ENCODE measurements at regions of chr7 and their contacts with region 1.

Region 1: DNA sequence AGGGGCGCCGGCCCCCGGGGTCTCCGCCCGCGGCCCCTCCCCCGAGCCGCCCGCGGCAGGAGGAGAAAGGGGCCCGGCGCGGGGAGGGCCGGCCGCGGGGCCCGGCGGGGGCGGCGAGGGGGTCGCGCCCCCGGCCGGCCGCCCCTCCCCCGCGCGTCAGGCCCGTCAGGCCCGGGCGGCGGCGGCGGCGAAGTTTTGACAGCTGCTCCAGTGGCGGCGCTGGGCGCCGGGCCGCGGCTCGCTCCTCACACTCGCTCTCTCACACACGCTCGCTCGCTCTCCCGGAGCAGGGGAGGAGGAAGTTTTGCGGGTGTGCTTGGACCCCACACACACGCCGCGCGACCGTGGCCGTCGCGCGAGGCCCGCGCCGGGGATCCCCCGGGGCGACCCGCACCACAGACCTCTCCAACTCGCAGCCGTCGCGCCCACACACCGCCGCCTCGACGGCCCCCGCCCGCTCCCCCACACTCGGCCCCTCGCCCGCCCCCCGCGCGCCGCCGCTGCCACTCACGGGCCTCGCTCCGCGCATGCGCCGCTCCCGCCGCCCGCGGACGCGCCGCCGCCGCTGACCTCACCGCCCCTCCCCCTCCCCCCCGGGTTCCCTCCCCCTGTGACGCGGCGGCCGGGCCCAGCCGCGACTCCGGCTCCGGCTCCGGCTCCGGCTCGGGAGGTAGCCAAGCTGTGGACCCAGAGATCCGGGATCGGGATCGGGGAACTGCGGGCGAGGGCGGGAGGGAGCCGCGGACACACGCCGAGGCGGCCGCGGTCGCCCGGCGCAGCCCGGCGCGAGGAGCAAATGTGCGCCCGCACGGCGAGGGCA is 518 bp upstream of the KMT2C start:
- DNase-seq: no peak
- ATAC-seq: peak; percentile 54
- H3K4me3 ChIP-seq: peak overlapping the region; percentile 78
- H3K27ac ChIP-seq: peak overlapping the region; percentile 73
- H3K4me1 ChIP-seq: no peaks in the 10 kb centered on the region
- H3K27me3 ChIP-seq: no peaks in the 10 kb centered on the region
- CTCF ChIP-seq: no peak
- EP300 ChIP-seq: no peak
- POLR2A ChIP-seq: peak; percentile 72
- RAD21 ChIP-seq: no peak

Region 2: DNA sequence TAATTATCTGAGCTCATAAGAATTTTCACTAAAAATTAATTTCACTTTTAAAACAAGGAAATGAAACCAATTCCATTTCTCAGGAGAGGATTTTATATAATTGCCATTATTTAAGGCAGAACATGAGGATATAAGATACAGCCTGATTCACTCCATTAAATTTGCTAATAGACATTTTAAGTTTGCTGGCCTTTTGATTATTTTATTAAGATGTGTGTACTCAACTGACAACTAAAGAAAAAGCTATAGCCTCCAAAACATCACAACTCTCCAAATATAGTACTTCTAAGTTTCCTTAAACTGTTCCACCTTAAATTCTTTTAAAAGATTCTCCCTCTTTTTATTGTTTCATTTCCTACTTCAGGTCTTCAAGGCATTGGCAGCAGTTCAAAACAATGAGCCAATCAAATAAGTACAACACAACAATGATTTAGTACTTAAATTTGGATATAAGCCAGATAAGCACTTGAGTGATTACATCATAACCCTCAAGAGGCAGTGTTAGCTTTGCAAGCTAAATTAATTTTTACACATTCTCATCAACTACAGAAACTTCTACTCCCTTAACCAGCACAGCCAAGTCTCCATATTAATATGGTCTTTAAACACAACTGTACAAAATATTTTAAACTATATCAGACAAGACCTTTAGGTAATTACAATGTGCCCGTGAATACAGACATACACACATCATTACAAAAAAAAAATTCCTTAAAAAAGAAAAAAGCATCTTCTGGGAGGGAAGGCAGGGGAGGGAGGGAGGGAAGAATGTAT is 122.3 kb before region 1 on chr7:
- CTCF ChIA-PET with region 1: interaction called, 6 read pairs
- POLR2A ChIA-PET with region 1: interaction called, 3 read pairs
- RAD21 ChIA-PET with region 1: interaction called, 7 read pairs
- SMC1A ChIA-PET with region 1: interaction called, 11 read pairs
- in situ Hi-C with region 1: no loop called
- intact Hi-C with region 1: loop called (anchors 5 kb)
- DNase-seq: no peak
- ATAC-seq: peak; percentile 60
- H3K4me3 ChIP-seq: no peak overlapping the region
- H3K27ac ChIP-seq: no peak overlapping the region
- H3K4me1 ChIP-seq: peaks cover 12% of the 10 kb centered on the region; the same call in 1 of the 2 replicates
- H3K27me3 ChIP-seq: no peaks in the 10 kb centered on the region
- CTCF ChIP-seq: no peak
- EP300 ChIP-seq: no peak
- POLR2A ChIP-seq: no peak
- RAD21 ChIP-seq: no peak

Region 3: DNA sequence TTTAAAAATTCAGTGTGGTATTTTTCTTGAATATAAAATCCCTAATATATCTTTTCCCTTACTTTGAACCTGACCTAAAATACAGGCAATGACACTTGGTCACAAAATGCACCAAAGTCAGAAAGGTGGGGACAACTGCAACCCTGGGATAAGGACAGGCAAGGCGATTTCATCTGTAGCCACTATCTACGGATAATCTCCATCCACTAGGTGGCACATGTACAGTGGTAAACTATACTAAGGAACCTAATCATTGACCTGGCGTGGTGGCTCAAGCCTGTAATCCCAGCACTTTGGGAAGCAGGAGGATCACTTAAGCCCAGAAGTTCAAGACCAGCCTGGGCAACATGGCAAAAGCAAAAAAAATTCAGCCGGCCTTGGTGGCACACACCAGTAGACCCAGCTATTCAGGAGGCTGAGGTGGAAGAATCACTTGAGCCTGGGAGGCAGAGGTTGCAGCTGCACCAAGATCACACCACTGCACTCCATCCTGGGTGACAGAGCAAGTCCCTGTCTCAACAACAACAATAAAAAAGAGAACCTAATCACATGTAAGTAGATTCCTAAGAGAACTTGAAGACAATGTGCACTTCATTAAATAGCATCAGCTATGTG is 99.5 kb before region 1 on chr7:
- CTCF ChIA-PET with region 1: interaction called, 26 read pairs
- POLR2A ChIA-PET with region 1: interaction called, 8 read pairs
- RAD21 ChIA-PET with region 1: interaction called, 16 read pairs
- SMC1A ChIA-PET with region 1: interaction called, 25 read pairs
- in situ Hi-C with region 1: no loop called
- intact Hi-C with region 1: loop called (anchors 2 kb)
- DNase-seq: no peak
- ATAC-seq: peak; percentile 90
- H3K4me3 ChIP-seq: peak overlapping the region; percentile 8; the same call in 1 of the 2 replicates
- H3K27ac ChIP-seq: no peak overlapping the region
- H3K4me1 ChIP-seq: peaks cover 31% of the 10 kb centered on the region; the same call in 1 of the 2 replicates
- H3K27me3 ChIP-seq: no peaks in the 10 kb centered on the region
- CTCF ChIP-seq: peak; percentile 51 to 57 (median 57); a peak in 5 of 6 replicates
- EP300 ChIP-seq: no peak
- POLR2A ChIP-seq: no peak
- RAD21 ChIP-seq: peak; percentile 67

Region 4: GRCh38 chr7:152463709-152464311 is 27.5 kb after region 1 on chr7:
- CTCF ChIA-PET with region 1: no interaction called
- POLR2A ChIA-PET with region 1: interaction called, 3 read pairs
- RAD21 ChIA-PET with region 1: interaction called, 16 read pairs
- SMC1A ChIA-PET with region 1: interaction called, 7 read pairs
- in situ Hi-C with region 1: no loop called
- intact Hi-C with region 1: loop called (anchors 2 kb)
- DNase-seq: peak; percentile 95
- ATAC-seq: peak; percentile 93
- H3K4me3 ChIP-seq: peak overlapping the region; percentile 89
- H3K27ac ChIP-seq: peak overlapping the region; percentile 96
- H3K4me1 ChIP-seq: no peaks in the 10 kb centered on the region; the same call in 1 of the 2 replicates
- H3K27me3 ChIP-seq: no peaks in the 10 kb centered on the region
- CTCF ChIP-seq: no peak
- EP300 ChIP-seq: peak; percentile 20 to 72; a peak in 2 of 4 replicates
- POLR2A ChIP-seq: peak; percentile 90; the same call in 1 of the 2 replicates
- RAD21 ChIP-seq: no peak

Region 5: DNA sequence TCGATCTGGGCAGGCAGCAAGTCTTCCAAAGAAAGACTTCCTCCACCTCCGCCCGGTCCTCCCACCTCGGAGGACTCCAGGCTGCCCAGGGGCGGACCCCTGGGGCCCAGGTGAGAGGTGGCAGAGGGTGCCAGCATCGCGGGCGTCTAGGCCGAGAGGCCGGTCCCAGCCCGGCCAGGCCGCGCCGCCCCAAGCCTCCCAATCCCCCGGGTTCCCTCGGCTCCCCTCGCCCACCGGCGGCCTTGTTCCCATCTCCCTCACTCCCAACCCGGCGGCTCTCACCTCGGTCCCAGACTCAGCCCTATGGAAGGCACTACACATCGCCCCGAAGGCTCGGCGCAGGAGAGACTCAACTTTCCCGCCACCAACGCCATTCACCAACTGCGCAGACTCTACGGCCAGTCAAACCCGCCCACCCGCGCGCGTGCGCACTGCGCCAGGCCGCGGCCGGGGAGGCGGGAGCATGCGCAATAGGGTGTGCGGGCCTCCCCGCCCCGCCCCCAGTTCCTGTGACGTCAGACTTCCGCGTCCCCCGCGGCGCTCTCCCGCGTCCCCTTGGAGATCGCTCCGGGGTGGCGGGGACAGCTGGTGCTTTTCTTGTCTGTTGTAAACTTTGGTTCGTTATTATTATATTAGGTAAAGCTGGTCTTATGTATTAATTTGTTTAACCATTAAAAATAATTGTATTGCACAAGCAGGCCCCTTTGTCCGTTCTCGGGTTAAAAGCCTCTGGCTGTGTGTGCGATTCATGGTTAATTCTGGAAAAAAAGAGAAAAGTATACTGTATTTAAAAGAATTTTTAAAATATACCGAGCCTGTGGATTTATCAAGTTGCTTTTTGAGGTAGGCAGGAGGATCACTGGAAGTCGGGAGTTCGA is 239.7 kb after region 1 on chr7 and contains the start of gene XRCC2:
- CTCF ChIA-PET with region 1: interaction called, 3 read pairs
- POLR2A ChIA-PET with region 1: no interaction called
- RAD21 ChIA-PET with region 1: no interaction called
- SMC1A ChIA-PET with region 1: interaction called, 5 read pairs
- in situ Hi-C with region 1: no loop called
- intact Hi-C with region 1: loop called (anchors 10 kb)
- DNase-seq: peak; percentile 77
- ATAC-seq: peak; percentile 96
- H3K4me3 ChIP-seq: peak within 1 kb of the TSS; percentile 96
- H3K27ac ChIP-seq: peak within 1 kb of the TSS; percentile 83
- H3K4me1 ChIP-seq: no peaks in the 10 kb centered on the region
- H3K27me3 ChIP-seq: no peaks in the 10 kb centered on the region
- CTCF ChIP-seq: no peak
- EP300 ChIP-seq: peak in 1 of 2 experiments; percentile 47; a peak in 1 of 4 replicates
- POLR2A ChIP-seq: peak; percentile 88
- RAD21 ChIP-seq: no peak
- polyA plus RNA-seq, gene XRCC2: 4.8 to 6.3 TPM

Measured in GM12878 (cell line).